ENCODE measurements at regions of chr18 and their contacts with region 1.

Region 1: GRCh38 chr18:58671111-58671631 is at the start of gene MALT1:
- H3K4me3 ChIP-seq: peak within 1 kb of the TSS; percentile 71
- H3K27ac ChIP-seq: peak within 1 kb of the TSS; percentile 98
- H3K4me1 ChIP-seq: peaks cover 35% of the 10 kb centered on the region
- CTCF ChIP-seq: no peak

Region 2: DNA sequence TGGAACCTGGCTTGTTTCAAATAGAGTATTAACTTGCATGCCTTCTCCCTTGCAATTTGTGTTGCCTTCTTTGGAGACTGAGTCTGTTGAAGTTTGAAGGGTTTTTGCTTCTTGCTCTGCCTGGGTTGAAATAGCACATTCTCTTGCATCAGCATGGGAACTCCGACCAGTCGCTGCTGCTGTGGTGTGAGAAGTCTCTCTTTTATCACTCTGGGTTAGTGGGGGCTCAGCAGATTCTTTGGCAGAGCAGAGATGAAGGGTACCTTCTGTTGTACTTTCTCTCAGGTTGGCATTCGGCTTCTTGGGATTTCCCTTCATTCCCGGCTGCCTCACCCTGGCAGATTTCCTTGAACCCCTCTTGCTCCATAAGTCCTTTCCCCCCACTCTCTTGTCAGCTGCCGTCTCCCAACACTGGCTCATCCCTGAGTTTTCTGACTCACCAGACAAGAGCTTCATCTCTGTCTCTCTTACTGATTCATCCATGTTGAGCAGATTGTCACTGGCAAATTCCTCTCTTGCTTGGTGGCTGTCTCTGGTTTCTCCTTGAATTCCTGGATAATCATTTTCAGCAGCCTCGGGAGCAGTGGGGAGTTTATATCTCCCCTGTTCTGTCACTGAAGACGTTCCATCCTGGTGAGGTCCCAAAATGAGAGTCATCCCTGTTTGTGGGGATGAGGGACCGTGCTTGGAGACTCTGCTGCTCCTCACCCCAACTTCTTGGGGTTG is 92.2 kb before region 1 on chr18:
- CTCF ChIA-PET with region 1: interaction called, 4 read pairs
- POLR2A ChIA-PET with region 1: interaction called, 12 read pairs
- H3K4me3 ChIP-seq: no peak overlapping the region
- H3K27ac ChIP-seq: no peak overlapping the region; the same call in 1 of the 2 replicates
- H3K4me1 ChIP-seq: peaks cover 28% of the 10 kb centered on the region
- CTCF ChIP-seq: no peak

Region 3: GRCh38 chr18:58611471-58612131 is 59.6 kb before region 1 on chr18:
- CTCF ChIA-PET with region 1: interaction called, 3 read pairs
- POLR2A ChIA-PET with region 1: interaction called, 15 read pairs
- H3K4me3 ChIP-seq: no peak overlapping the region
- H3K27ac ChIP-seq: peak overlapping the region; percentile 22; the same call in 1 of the 2 replicates
- H3K4me1 ChIP-seq: peaks cover 11% of the 10 kb centered on the region
- CTCF ChIP-seq: no peak

Region 4: DNA sequence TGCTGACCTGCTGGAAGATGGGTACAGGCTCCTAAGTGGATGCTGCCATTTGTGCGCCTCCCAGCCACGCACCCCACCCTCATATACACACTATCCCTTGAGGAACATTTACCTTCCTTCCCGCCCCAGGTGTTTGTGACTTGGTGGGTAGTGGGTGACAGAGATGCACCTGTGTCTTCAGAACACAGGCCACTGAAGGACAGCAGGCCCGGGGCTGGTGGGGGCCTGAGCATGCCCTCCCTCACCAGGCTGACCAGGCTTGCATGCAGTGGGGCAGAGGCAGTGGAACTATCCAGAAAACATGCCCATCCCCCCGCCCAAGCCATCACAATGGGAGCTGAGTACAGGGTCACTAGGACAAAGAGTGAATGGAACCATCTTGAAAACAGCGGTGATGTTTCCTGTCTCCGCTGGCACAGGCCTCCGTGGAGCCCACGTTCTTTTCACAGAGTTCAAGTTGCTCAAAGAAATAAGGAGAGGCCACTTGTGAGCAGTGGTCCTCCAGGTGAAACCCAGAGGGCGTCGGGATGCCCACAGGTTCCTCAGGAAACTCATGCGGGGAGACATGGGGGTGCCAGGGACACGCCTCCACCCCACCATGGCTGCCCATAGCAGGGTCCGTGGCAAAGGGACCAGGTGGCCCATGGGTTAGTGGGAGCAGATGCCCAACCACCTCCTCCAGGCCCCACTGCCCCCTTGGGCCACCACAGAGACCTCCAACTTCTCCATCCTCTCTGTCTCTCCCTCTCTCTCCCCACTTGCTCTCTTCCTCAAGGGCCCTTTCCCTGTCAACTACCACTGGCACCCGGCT is 91.0 kb after region 1 on chr18:
- CTCF ChIA-PET with region 1: interaction called, 18 read pairs
- POLR2A ChIA-PET with region 1: interaction called, 13 read pairs
- H3K4me3 ChIP-seq: no peak overlapping the region
- H3K27ac ChIP-seq: no peak overlapping the region
- H3K4me1 ChIP-seq: peaks cover 4% of the 10 kb centered on the region; the same call in 1 of the 2 replicates
- CTCF ChIP-seq: no peak

Region 5: GRCh38 chr18:59249205-59249774 is 578.1 kb after region 1 on chr18:
- CTCF ChIA-PET with region 1: no interaction called
- POLR2A ChIA-PET with region 1: no interaction called
- H3K4me3 ChIP-seq: no peak overlapping the region
- H3K27ac ChIP-seq: no peak overlapping the region
- H3K4me1 ChIP-seq: no peaks in the 10 kb centered on the region; the same call in 1 of the 2 replicates
- CTCF ChIP-seq: peak; percentile 48; the same call in 1 of the 2 replicates

Measured in HEK293 (cell line).